CD4-positive, alpha-beta T cell (primary cell): ENCODE measurements at regions of chr18 and their contacts with region 1.

Region 1: GRCh38 chr18:56709463-56709862 is 58.3 kb downstream of the WDR7 start:
- DNase-seq: peak in 8 of 14 experiments; percentile 20 to 76 (median 32)
- ATAC-seq: peak; percentile 100
- H3K4me3 ChIP-seq: no peak overlapping the region
- H3K4me3 Mint-ChIP-seq: no peak overlapping the region
- H3K27ac ChIP-seq: no peak overlapping the region
- H3K27ac Mint-ChIP-seq: no peak overlapping the region
- H3K4me1 ChIP-seq: no peaks in the 10 kb centered on the region
- H3K4me1 Mint-ChIP-seq: peaks cover 4% of the 10 kb centered on the region
- H3K27me3 ChIP-seq: no peaks in the 10 kb centered on the region
- H3K27me3 Mint-ChIP-seq: no peaks in the 10 kb centered on the region
- CTCF ChIP-seq: peak; percentile 53

Region 2: GRCh38 chr18:55415258-55415871 is 1294.1 kb before region 1 on chr18:
- CTCF ChIA-PET with region 1: no interaction called
- POLR2A ChIA-PET with region 1: no interaction called
- intact Hi-C with region 1: loop called in 1 of 2 experiments (anchors 5 kb)
- DNase-seq: peak; percentile 36 to 82 (median 56)
- ATAC-seq: peak; percentile 57
- H3K4me3 ChIP-seq: no peak overlapping the region
- H3K4me3 Mint-ChIP-seq: no peak overlapping the region
- H3K27ac ChIP-seq: no peak overlapping the region
- H3K27ac Mint-ChIP-seq: no peak overlapping the region
- H3K4me1 ChIP-seq: no peaks in the 10 kb centered on the region
- H3K4me1 Mint-ChIP-seq: peaks cover 3% of the 10 kb centered on the region
- H3K27me3 ChIP-seq: no peaks in the 10 kb centered on the region
- H3K27me3 Mint-ChIP-seq: peaks cover 7% of the 10 kb centered on the region
- CTCF ChIP-seq: peak; percentile 92

Region 3: DNA sequence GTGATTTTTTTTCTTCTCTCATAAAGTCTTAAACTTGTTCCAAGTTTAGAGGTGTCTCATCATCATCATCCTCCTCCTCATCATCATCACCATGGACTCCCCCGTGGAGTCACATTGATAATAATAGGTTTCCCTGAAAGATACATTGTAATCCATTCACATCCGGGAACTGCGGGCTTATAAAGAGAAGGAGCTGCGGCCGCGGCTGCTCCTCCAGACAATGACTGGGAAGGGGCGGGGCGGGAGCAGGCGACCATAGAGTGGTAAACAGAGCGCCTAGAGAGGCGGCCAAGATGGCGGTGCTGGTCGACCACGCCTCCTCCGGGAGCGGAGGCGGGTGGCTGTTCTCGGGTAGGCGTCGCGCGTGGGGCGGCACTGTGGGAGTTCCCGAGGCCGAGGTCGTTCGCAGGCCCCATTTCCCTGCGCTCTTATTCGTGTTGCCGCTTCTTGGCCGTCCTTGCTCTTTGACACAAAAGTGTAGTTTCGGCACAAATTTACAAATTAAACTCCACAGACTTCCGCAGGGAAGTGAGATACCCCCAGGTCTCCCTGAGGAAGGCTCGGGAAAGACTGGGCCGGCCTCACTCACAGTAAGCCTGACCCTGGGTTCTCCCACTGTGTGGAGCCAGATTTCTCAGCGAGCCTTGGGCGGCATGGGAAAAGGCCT is 1119.7 kb before region 1 on chr18:
- CTCF ChIA-PET with region 1: no interaction called
- POLR2A ChIA-PET with region 1: no interaction called
- intact Hi-C with region 1: loop called in 1 of 2 experiments (anchors 10 kb)
- DNase-seq: peak; percentile 10 to 88 (median 66)
- ATAC-seq: peak; percentile 90
- H3K4me3 ChIP-seq: peak overlapping the region; percentile 56
- H3K4me3 Mint-ChIP-seq: peak overlapping the region; percentile 92
- H3K27ac ChIP-seq: no peak overlapping the region
- H3K27ac Mint-ChIP-seq: peak overlapping the region; percentile 78
- H3K4me1 ChIP-seq: peaks cover 7% of the 10 kb centered on the region
- H3K4me1 Mint-ChIP-seq: peaks cover 29% of the 10 kb centered on the region
- H3K27me3 ChIP-seq: peaks cover 20 to 31% of the 10 kb centered on the region in 2 experiments
- H3K27me3 Mint-ChIP-seq: peaks cover 54% of the 10 kb centered on the region
- CTCF ChIP-seq: no peak

Region 4: DNA sequence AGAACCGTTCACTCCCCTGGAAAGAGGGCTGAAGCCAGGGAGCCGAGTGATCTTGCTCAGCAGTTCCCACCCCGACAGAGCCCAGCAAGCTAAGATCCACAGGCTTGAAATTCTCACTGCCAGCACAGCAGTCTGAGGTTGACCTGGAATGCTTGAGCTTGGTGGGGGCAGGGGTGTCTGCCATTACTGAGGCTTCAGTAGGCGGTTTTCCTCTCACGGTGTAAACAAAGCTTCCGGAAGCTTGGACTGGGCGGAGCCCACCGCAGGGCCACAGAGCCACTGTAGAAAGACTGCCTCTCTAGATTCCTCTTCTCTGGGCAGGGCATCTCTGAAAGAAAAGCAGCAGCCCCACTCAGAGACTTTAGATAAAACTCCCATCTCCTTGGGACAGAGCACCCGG is 122.5 kb after region 1 on chr18:
- CTCF ChIA-PET with region 1: no interaction called
- POLR2A ChIA-PET with region 1: no interaction called
- intact Hi-C with region 1: no loop called
- DNase-seq: no peak
- ATAC-seq: no peak
- H3K4me3 ChIP-seq: no peak overlapping the region
- H3K4me3 Mint-ChIP-seq: no peak overlapping the region
- H3K27ac ChIP-seq: no peak overlapping the region
- H3K27ac Mint-ChIP-seq: no peak overlapping the region
- H3K4me1 ChIP-seq: no peaks in the 10 kb centered on the region
- H3K4me1 Mint-ChIP-seq: no peaks in the 10 kb centered on the region
- H3K27me3 ChIP-seq: no peaks in the 10 kb centered on the region
- H3K27me3 Mint-ChIP-seq: no peaks in the 10 kb centered on the region
- CTCF ChIP-seq: no peak